AG04450 (cell line): ENCODE measurements at regions of chr5 and their contacts with region 1.

Region 1: DNA sequence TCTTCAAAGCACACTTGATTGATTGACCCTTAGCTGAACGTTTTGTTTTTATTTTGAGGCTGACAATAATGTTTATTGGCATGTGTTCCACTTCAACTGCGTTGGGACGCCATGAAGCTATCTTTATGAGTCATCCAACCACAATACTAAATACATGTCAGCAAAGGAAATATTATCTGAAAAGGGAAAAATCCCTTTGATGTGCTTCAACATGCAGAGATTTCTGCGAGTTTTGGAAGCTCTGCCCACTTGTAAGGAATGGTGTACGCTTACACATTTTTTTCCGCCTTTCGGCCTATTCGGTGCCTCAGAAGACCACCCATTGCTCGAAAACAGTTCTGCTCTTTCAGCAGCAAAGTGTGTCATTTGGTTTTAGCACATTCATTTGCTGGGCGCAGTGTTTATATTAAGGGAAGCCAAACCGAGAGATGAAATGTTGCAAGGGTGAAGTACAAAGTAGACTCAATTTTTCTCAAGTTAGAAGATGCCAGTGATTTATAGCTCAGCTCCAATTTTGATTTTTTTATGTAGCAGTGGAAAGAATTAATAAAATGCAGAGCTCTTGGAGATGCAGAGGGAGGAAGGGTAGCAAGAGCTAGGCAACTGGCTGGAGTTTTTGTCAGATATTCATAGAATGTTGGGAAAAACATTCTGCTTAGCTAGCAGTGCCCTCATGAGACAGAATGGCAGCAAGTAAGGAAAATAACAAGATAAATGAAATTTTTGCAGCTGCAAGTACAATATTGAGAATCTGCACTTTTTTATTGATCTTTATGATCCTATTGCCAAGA is 68.9 kb downstream of the PRDM6 start:
- DNase-seq: peak; percentile 58
- H3K4me3 ChIP-seq: peak overlapping the region; percentile 33; the same call in 1 of the 2 replicates
- H3K27ac ChIP-seq: no peak overlapping the region
- H3K27me3 ChIP-seq: peaks cover 6% of the 10 kb centered on the region
- CTCF ChIP-seq: peak; percentile 37

Region 2: GRCh38 chr5:122942164-122942914 is 215.6 kb before region 1 on chr5:
- CTCF ChIA-PET with region 1: no interaction called
- POLR2A ChIA-PET with region 1: no interaction called
- DNase-seq: no peak
- H3K4me3 ChIP-seq: no peak overlapping the region
- H3K27ac ChIP-seq: no peak overlapping the region
- H3K27me3 ChIP-seq: no peaks in the 10 kb centered on the region
- CTCF ChIP-seq: no peak

Region 3: GRCh38 chr5:123089914-123090670 is 67.9 kb before region 1 on chr5:
- CTCF ChIA-PET with region 1: interaction called, 4 read pairs
- POLR2A ChIA-PET with region 1: interaction called, 11 read pairs
- DNase-seq: no peak
- H3K4me3 ChIP-seq: peak overlapping the region; percentile 73
- H3K27ac ChIP-seq: no peak overlapping the region
- H3K27me3 ChIP-seq: peaks cover 41% of the 10 kb centered on the region
- CTCF ChIP-seq: no peak

Region 4: DNA sequence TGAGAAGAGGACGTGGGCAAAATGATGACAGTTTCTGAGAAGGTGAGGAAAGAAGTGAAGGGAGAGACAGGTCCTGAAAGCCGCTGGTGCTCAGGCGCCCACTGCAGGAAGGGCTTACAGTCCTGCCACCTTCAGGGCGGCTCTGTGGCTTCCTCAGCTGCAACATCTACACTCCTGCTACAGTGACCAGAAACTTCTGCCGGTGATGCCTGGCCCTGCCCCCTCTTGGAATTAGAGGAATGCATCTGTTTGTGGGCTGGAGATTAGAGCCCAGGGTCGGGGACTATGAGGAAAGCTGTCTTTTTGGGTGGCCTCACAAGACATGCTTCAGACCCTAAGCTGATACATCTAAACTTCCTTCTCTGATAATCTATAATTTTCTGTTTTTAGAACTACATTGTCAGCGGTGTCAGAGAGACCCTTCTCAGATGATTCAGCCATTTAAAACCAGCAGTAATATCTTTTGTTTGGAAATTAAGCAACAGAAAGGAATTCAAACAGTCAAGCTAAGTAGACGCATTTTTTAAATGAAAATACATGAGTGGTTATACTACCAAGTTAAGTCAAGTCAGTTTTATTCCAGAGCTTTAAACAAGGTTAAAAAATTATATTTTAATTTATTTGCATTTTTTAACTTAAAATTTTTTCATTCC is 38.5 kb before region 1 on chr5:
- CTCF ChIA-PET with region 1: interaction called, 7 read pairs
- POLR2A ChIA-PET with region 1: interaction called, 19 read pairs
- DNase-seq: no peak
- H3K4me3 ChIP-seq: peak overlapping the region; percentile 41
- H3K27ac ChIP-seq: peak overlapping the region; percentile 90
- H3K27me3 ChIP-seq: no peaks in the 10 kb centered on the region
- CTCF ChIP-seq: peak; percentile 20; the same call in 1 of the 2 replicates

Region 5: GRCh38 chr5:123496892-123497291 is 338.9 kb after region 1 on chr5:
- CTCF ChIA-PET with region 1: no interaction called
- POLR2A ChIA-PET with region 1: no interaction called
- DNase-seq: no peak
- H3K4me3 ChIP-seq: no peak overlapping the region
- H3K27ac ChIP-seq: no peak overlapping the region
- H3K27me3 ChIP-seq: no peaks in the 10 kb centered on the region
- CTCF ChIP-seq: no peak